ENCODE measurements at regions of chr10 and their contacts with region 1.

Region 1: GRCh38 chr10:109929501-109930219 is 6.3 kb upstream of the XPNPEP1 start:
- DNase-seq: no peak
- H3K4me3 ChIP-seq: no peak overlapping the region
- H3K27ac ChIP-seq: no peak overlapping the region
- H3K4me1 ChIP-seq: peaks cover 0 to 5% of the 10 kb centered on the region in 2 donors
- H3K27me3 ChIP-seq: no peaks in the 10 kb centered on the region
- CTCF ChIP-seq: no peak

Region 2: GRCh38 chr10:109966961-109967738 is 37.5 kb after region 1 on chr10:
- intact Hi-C with region 1: loop called (anchors 5 kb)
- DNase-seq: no peak
- H3K4me3 ChIP-seq: no peak overlapping the region
- H3K27ac ChIP-seq: peak overlapping the region in 1 of 2 donors; percentile 2
- H3K4me1 ChIP-seq: peaks cover 11 to 47% of the 10 kb centered on the region in 2 donors
- H3K27me3 ChIP-seq: no peaks in the 10 kb centered on the region
- CTCF ChIP-seq: no peak

Measured in ascending aorta (tissue), 2 donors.